ENCODE measurements at regions of chr2 and their contacts with region 1.

Region 1: DNA sequence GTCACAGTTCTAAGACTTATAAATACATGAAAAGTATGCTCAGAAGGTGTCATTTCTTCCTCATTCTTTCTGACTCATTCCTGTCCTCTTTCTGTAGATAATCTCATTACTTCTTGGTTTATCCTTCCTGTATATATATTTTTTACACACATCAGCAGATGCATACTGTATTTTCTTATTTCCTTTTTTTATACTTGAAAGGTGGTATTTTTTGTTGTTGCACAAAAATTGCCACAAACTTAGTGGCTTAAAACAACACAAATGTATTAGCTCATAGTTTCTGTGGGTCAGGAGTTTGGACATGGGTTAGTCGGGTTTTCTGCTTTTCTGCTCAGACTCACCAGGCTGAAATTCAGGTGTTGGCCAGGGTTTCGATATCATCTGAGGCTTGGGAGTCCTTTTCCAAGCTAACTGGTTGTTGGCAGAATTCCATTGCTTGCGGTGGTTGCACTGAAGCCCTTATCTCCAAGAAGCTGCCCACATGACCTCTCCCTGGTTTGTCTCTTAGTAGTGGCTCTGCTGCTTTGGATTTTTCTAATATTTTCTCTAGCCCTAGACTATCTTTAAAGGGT is 162.6 kb downstream of the FMNL2 start:
- DNase-seq: no peak
- H3K4me3 ChIP-seq: no peak overlapping the region
- H3K27ac ChIP-seq: no peak overlapping the region
- H3K4me1 ChIP-seq: peaks cover 18 to 40% (median 24%) of the 10 kb centered on the region in 4 donors
- H3K27me3 ChIP-seq: no peaks in the 10 kb centered on the region
- CTCF ChIP-seq: no peak
- EP300 ChIP-seq: no peak
- POLR2A ChIP-seq: no peak

Region 2: GRCh38 chr2:152464851-152465470 is 32.6 kb before region 1 on chr2:
- intact Hi-C with region 1: loop called (anchors 5 kb)
- DNase-seq: no peak
- H3K4me3 ChIP-seq: no peak overlapping the region
- H3K27ac ChIP-seq: no peak overlapping the region
- H3K4me1 ChIP-seq: peaks cover 26 to 61% (median 59%) of the 10 kb centered on the region in 4 donors
- H3K27me3 ChIP-seq: no peaks in the 10 kb centered on the region
- CTCF ChIP-seq: no peak
- EP300 ChIP-seq: no peak
- POLR2A ChIP-seq: no peak

Region 3: DNA sequence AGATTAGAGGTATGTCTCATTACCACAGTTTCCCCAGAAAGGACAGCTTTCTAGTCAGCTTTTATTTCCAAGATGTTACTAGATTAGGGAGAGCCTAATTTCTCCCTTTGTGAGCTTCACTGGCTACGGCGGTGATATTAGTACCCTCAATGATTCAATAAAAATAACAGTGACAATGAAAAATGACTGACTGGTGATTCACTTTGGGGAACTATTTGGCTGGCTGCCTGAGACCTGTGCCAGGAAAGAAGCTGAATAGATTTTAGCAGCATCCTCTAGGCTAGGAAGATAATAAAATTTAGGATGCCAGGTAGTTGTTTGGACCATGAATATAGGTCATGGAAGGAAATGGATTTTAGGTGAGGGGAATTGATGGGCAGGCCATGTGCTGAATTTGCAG is 16.1 kb after region 1 on chr2:
- intact Hi-C with region 1: no loop called
- DNase-seq: no peak
- H3K4me3 ChIP-seq: no peak overlapping the region
- H3K27ac ChIP-seq: no peak overlapping the region
- H3K4me1 ChIP-seq: peaks cover 0 to 9% (median 7%) of the 10 kb centered on the region in 4 donors
- H3K27me3 ChIP-seq: no peaks in the 10 kb centered on the region
- CTCF ChIP-seq: no peak
- EP300 ChIP-seq: no peak
- POLR2A ChIP-seq: no peak

Measured in esophagus muscularis mucosa (tissue), 4 donors.